ENCODE measurements at regions of chr19 and their contacts with region 1.

Region 1: DNA sequence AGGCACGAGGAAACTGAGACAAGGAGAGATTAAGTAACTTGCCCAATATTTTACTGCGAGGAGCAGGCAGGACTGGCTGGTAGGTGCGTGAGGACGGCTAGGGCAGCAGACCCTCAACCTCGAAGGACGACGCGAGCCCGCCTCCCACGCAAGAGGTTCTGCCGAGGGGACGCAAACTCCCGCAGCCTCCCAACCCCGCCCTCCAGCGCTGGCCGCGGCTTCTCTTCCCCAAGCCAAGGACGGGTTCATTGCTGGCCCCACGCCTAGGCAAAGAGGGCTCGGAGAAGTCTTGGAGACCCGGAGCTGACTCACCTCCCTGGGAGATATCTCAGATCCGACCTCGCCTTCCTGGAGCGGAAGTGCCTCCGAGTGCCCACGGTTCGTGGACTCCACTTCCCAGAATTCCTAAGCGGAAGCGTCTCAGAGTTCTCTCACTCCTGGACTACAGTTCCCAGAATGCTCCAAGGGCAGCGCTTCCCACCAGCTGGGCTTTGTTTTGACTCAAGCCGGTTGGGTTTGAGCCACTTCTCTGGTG is at the start of gene ZNF235:
- DNase-seq: peak; percentile 88
- ATAC-seq: peak; percentile 100
- H3K4me3 ChIP-seq: peak within 1 kb of the TSS; percentile 74 to 94 (median 88)
- H3K27ac ChIP-seq: peak within 1 kb of the TSS; percentile 37
- H3K4me1 ChIP-seq: peaks cover 17% of the 10 kb centered on the region
- H3K27me3 ChIP-seq: no peaks in the 10 kb centered on the region; a peak in 1 of 5 replicates
- CTCF ChIP-seq: no peak
- EP300 ChIP-seq: no peak
- POLR2A ChIP-seq: peak; percentile 37 to 82; a peak in 3 of 4 replicates
- RAD21 ChIP-seq: peak; percentile 8; the same call in 1 of the 2 replicates
- total RNA-seq, gene ZNF235: 5.5 and 5.9 TPM in 2 replicates

Region 2: GRCh38 chr19:44207126-44207803 is 97.5 kb before region 1 on chr19:
- CTCF ChIA-PET with region 1: no interaction called
- POLR2A ChIA-PET with region 1: interaction called, 7 read pairs
- in situ Hi-C with region 1: no loop called
- intact Hi-C with region 1: loop called (anchors 10 kb)
- DNase-seq: peak; percentile 94
- ATAC-seq: peak; percentile 99
- H3K4me3 ChIP-seq: peak overlapping the region; percentile 80 to 94 (median 88)
- H3K27ac ChIP-seq: peak overlapping the region; percentile 66
- H3K4me1 ChIP-seq: no peaks in the 10 kb centered on the region
- H3K27me3 ChIP-seq: peaks cover 0 to 3% of the 10 kb centered on the region in 2 experiments; a peak in 1 of 5 replicates
- CTCF ChIP-seq: no peak
- EP300 ChIP-seq: peak in 1 of 2 experiments; percentile 17; a peak in 1 of 4 replicates
- POLR2A ChIP-seq: peak; percentile 49 to 68; a peak in 3 of 4 replicates
- RAD21 ChIP-seq: no peak

Region 3: GRCh38 chr19:44254496-44254895 is 50.2 kb before region 1 on chr19:
- CTCF ChIA-PET with region 1: no interaction called
- POLR2A ChIA-PET with region 1: no interaction called
- in situ Hi-C with region 1: no loop called
- intact Hi-C with region 1: loop called (anchors 2 kb)
- DNase-seq: peak; percentile 85
- ATAC-seq: peak; percentile 98
- H3K4me3 ChIP-seq: no peak overlapping the region
- H3K27ac ChIP-seq: peak overlapping the region; percentile 54
- H3K4me1 ChIP-seq: peaks cover 22% of the 10 kb centered on the region
- H3K27me3 ChIP-seq: no peaks in the 10 kb centered on the region
- CTCF ChIP-seq: peak; percentile 19; the same call in 1 of the 2 replicates
- EP300 ChIP-seq: no peak
- POLR2A ChIP-seq: no peak
- RAD21 ChIP-seq: no peak

Region 4: DNA sequence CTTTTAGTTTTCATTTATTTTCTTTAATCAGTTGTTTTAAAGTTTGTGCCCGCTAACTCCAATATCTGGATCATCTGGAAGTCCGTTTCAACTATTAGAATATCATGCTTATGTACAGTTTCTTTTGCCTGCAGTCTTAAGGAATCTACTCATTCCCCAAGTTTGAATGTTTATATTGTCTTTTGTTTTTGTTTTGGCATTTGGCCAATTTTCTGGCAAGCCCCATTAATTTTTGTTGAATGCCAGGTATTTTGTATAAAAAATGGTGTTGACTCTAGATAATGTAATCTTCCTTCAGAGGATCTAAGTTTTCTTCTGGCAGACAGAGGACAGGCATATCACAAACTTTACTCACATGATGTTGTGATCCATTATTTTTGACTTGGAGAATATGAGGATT is 11.2 kb after region 1 on chr19:
- CTCF ChIA-PET with region 1: no interaction called
- POLR2A ChIA-PET with region 1: no interaction called
- in situ Hi-C with region 1: no loop called
- intact Hi-C with region 1: no loop called
- DNase-seq: no peak
- ATAC-seq: no peak
- H3K4me3 ChIP-seq: no peak overlapping the region
- H3K27ac ChIP-seq: no peak overlapping the region
- H3K4me1 ChIP-seq: no peaks in the 10 kb centered on the region
- H3K27me3 ChIP-seq: no peaks in the 10 kb centered on the region
- CTCF ChIP-seq: no peak
- EP300 ChIP-seq: no peak
- POLR2A ChIP-seq: no peak
- RAD21 ChIP-seq: no peak

Region 5: GRCh38 chr19:44476559-44477408 is 172.1 kb after region 1 on chr19:
- CTCF ChIA-PET with region 1: no interaction called
- POLR2A ChIA-PET with region 1: no interaction called
- in situ Hi-C with region 1: no loop called
- intact Hi-C with region 1: no loop called
- DNase-seq: peak; percentile 16
- ATAC-seq: no peak
- H3K4me3 ChIP-seq: no peak overlapping the region
- H3K27ac ChIP-seq: no peak overlapping the region
- H3K4me1 ChIP-seq: no peaks in the 10 kb centered on the region
- H3K27me3 ChIP-seq: no peaks in the 10 kb centered on the region
- CTCF ChIP-seq: no peak
- EP300 ChIP-seq: no peak
- POLR2A ChIP-seq: no peak
- RAD21 ChIP-seq: no peak